ENCODE measurements at regions of chr17 and their contacts with region 1.

Region 1: DNA sequence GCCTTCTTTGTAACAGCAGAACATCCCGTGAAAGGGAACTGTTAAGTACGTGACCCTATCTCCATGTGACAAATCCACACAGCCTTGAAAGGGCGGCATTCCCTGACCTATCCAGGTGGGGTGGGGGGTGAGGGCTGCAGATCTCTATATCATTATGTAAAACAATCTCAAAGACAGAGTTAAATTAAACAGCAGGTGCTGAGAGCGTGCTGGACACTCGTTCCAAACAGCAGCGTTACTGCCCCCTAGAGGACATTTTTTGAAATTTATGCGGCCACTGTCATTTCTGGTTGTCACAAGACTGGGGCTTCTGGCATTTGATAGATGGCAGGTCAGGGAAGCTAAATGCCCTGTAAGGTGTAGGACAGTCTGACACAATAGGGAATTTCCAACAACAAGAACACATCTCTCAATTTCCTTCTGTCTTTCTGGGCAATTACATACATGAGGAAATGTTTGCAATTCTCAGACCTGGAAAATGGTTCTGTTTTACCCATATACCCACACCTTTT is 6.7 kb upstream of the SLC25A39 start:
- DNase-seq: peak in 5 of 10 donors; percentile 62 to 85 (median 65)

Region 2: GRCh38 chr17:44210342-44211192 is 120.7 kb before region 1 on chr17:
- intact Hi-C with region 1: loop called (anchors 2 kb)
- DNase-seq: peak; percentile 80 to 99 (median 88)

Measured in posterior cingulate gyrus (tissue), 11 donors.